H1 (cell line): ENCODE measurements at regions of chr4 and their contacts with region 1.

Region 1: GRCh38 chr4:3346146-3346545 is 53.3 kb downstream of the RGS12 start:
- DNase-seq: no peak
- H3K4me3 ChIP-seq: no peak overlapping the region
- H3K27ac ChIP-seq: no peak overlapping the region
- H3K4me1 ChIP-seq: peaks cover 3 to 10% (median 5%) of the 10 kb centered on the region in 4 experiments; a peak in 5 of 7 replicates
- H3K27me3 ChIP-seq: no peaks in the 10 kb centered on the region
- CTCF ChIP-seq: peak in 2 of 3 experiments; percentile 76 to 78; a peak in 3 of 4 replicates
- EP300 ChIP-seq: no peak
- POLR2A ChIP-seq: no peak
- RAD21 ChIP-seq: peak; percentile 90 to 91

Region 2: DNA sequence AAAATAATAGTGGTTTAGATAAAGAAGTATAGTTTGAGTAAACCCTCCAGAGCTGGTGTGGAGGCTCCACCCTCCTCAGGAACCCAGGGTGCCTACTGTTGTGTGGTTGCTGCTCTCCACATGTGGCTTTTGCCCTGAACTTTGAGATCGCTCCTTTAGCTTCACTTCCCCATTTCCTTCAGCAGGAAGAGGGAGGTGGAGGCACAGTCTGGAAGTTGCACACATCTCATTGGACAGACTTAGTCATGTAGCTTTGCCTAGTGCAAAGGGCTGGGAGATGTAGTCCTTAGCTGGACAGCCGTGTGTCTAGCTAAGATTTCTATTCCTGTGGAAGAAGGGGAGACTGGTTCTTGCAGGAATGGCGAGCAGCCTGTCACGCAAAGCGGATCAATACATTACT is 15.4 kb before region 1 on chr4:
- CTCF ChIA-PET with region 1: interaction called, 11 read pairs
- POLR2A ChIA-PET with region 1: interaction called, 4 read pairs
- DNase-seq: no peak
- H3K4me3 ChIP-seq: no peak overlapping the region
- H3K27ac ChIP-seq: no peak overlapping the region
- H3K4me1 ChIP-seq: peaks cover 0 to 2% (median 0%) of the 10 kb centered on the region in 4 experiments; a peak in 3 of 7 replicates
- H3K27me3 ChIP-seq: no peaks in the 10 kb centered on the region
- CTCF ChIP-seq: no peak
- EP300 ChIP-seq: no peak
- POLR2A ChIP-seq: no peak
- RAD21 ChIP-seq: no peak

Region 3: DNA sequence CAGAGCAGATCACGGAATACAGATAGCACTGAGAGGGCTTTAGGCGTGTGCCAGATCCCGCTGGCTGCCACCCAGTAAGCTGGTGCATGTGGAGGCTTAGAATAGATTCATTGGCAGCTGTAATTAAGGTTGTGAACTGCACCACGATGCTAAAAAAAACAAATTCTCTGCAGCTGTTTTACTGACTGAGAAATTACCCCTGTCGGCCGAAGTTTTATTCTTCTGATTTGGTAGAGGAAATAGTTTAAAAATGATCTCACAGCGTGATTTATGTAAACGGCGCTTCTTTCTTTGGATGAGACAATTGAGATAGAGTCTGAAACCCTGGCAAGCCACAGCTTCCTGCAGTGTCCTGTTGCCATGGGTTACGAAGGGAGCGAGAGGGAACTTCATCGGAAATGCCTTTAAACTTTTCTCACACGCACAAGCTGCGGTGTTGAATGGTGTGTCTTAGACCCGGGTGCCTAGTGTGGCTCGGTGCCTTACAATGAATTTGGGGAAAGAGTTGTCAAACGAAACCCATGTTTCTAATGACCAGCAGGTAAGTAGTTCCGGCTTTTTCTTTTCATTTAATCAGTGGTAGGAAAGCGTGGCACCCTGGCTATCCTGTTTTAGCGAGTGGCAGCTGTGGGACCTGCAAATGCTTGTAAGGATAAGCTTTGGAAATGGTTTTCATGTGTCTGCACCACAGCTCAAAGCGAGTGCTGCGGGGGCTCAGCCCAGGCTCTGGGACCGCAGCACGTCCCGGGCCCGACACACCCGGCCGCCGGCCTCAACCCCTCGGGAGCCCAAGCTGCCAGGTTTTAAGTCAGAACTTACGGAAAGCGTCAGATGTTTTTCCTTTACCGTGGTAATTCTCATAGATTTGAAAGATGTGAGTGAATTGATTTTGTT is 23.9 kb after region 1 on chr4:
- CTCF ChIA-PET with region 1: interaction called, 41 read pairs
- POLR2A ChIA-PET with region 1: interaction called, 3 read pairs
- DNase-seq: peak in 1 of 2 experiments; percentile 54
- H3K4me3 ChIP-seq: peak overlapping the region in 3 of 4 experiments; percentile 8 to 47 (median 14); a peak in 5 of 8 replicates
- H3K27ac ChIP-seq: no peak overlapping the region
- H3K4me1 ChIP-seq: peaks cover 7 to 33% (median 21%) of the 10 kb centered on the region in 4 experiments
- H3K27me3 ChIP-seq: peaks cover 0 to 13% (median 10%) of the 10 kb centered on the region in 4 experiments; a peak in 3 of 7 replicates
- CTCF ChIP-seq: no peak
- EP300 ChIP-seq: no peak
- POLR2A ChIP-seq: no peak
- RAD21 ChIP-seq: no peak

Region 4: GRCh38 chr4:3418029-3418762 is 72.0 kb after region 1 on chr4:
- CTCF ChIA-PET with region 1: interaction called, 23 read pairs
- POLR2A ChIA-PET with region 1: no interaction called
- DNase-seq: no peak
- H3K4me3 ChIP-seq: no peak overlapping the region
- H3K27ac ChIP-seq: no peak overlapping the region
- H3K4me1 ChIP-seq: no peaks in the 10 kb centered on the region; a peak in 3 of 7 replicates
- H3K27me3 ChIP-seq: no peaks in the 10 kb centered on the region
- CTCF ChIP-seq: peak in 2 of 3 experiments; percentile 45 to 74; a peak in 3 of 4 replicates
- EP300 ChIP-seq: no peak
- POLR2A ChIP-seq: no peak
- RAD21 ChIP-seq: peak; percentile 32 to 43; a peak in 3 of 4 replicates

Region 5: GRCh38 chr4:3442959-3443749 is 97.0 kb after region 1 on chr4:
- CTCF ChIA-PET with region 1: interaction called, 152 read pairs
- POLR2A ChIA-PET with region 1: no interaction called
- DNase-seq: peak in 1 of 2 experiments; percentile 93
- H3K4me3 ChIP-seq: no peak overlapping the region
- H3K27ac ChIP-seq: no peak overlapping the region
- H3K4me1 ChIP-seq: no peaks in the 10 kb centered on the region
- H3K27me3 ChIP-seq: no peaks in the 10 kb centered on the region
- CTCF ChIP-seq: peak in 2 of 3 experiments; percentile 96 to 97; a peak in 3 of 4 replicates
- EP300 ChIP-seq: no peak
- POLR2A ChIP-seq: no peak
- RAD21 ChIP-seq: peak; percentile 96 to 97

Region 6: GRCh38 chr4:3514806-3515460 is 168.8 kb after region 1 on chr4:
- CTCF ChIA-PET with region 1: interaction called, 16 read pairs
- POLR2A ChIA-PET with region 1: interaction called, 3 read pairs
- DNase-seq: peak in 1 of 2 experiments; percentile 81
- H3K4me3 ChIP-seq: no peak overlapping the region
- H3K27ac ChIP-seq: no peak overlapping the region
- H3K4me1 ChIP-seq: 0 out of 7 replicates have a peak, but pooled peaks cover 0 to 2% (median under 1%) of the 10 kb centered on the region in 4 experiments
- H3K27me3 ChIP-seq: no peaks in the 10 kb centered on the region
- CTCF ChIP-seq: peak in 2 of 3 experiments; percentile 69 to 78; a peak in 3 of 4 replicates
- EP300 ChIP-seq: no peak
- POLR2A ChIP-seq: no peak
- RAD21 ChIP-seq: peak; percentile 57 to 67

Region 7: GRCh38 chr4:3582091-3582475 is 235.9 kb after region 1 on chr4:
- CTCF ChIA-PET with region 1: no interaction called
- POLR2A ChIA-PET with region 1: no interaction called
- DNase-seq: no peak
- H3K4me3 ChIP-seq: no peak overlapping the region
- H3K27ac ChIP-seq: no peak overlapping the region
- H3K4me1 ChIP-seq: no peaks in the 10 kb centered on the region
- H3K27me3 ChIP-seq: no peaks in the 10 kb centered on the region
- CTCF ChIP-seq: no peak
- EP300 ChIP-seq: no peak
- POLR2A ChIP-seq: no peak
- RAD21 ChIP-seq: no peak

Region 8: GRCh38 chr4:3630468-3631287 is 284.5 kb after region 1 on chr4:
- CTCF ChIA-PET with region 1: no interaction called
- POLR2A ChIA-PET with region 1: no interaction called
- DNase-seq: no peak
- H3K4me3 ChIP-seq: no peak overlapping the region
- H3K27ac ChIP-seq: no peak overlapping the region
- H3K4me1 ChIP-seq: peaks cover 0 to 2% (median 0%) of the 10 kb centered on the region in 4 experiments; a peak in 1 of 7 replicates
- H3K27me3 ChIP-seq: no peaks in the 10 kb centered on the region
- CTCF ChIP-seq: no peak
- EP300 ChIP-seq: no peak
- POLR2A ChIP-seq: no peak
- RAD21 ChIP-seq: no peak